CD4-positive, alpha-beta T cell (primary cell): ENCODE measurements at regions of chr17 and their contacts with region 1.

Region 1: DNA sequence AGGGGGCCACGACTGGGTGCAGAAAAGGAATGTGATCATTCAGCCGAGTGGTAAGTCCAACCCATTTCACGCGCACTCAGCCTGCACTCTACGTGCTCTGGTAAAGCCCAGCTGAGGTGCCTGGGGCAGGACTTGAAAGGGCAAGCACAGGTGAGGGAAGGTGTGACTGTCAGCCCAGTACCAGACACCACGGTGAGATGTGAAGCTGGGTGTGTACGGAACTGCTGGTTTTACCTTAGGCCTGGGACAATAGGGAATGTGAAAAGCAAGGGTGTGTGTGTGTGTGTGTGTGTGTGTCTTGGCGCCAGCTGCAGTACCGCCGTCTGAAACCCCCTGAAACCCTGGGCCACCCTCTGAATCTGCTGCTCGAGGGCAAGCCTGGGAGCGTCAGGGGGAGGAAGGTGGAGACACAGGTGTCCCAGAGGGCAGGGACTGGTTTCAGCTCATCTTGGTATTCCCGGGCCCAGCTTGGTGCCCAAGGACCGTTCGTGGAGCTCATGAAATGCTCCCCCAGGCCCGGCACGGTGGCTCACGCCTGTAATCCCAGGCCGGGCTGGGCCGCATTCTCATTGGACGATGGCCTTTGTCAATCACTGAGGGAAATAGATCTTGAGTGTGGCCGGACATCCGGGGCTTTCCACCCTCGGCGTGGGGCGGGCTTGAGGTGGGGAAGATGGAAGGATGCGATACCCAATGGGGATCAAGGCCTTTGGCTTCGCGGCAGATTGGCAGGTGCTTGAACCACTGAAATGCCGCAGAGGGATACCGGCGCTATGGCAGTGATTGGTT is 27.8 kb upstream of the ST6GALNAC1 start:
- DNase-seq: peak; percentile 95 to 100 (median 98)
- ATAC-seq: peak; percentile 98
- H3K4me3 ChIP-seq: peak overlapping the region; percentile 69
- H3K4me3 Mint-ChIP-seq: peak overlapping the region; percentile 88
- H3K27ac ChIP-seq: peak overlapping the region; percentile 72 to 81
- H3K27ac Mint-ChIP-seq: peak overlapping the region; percentile 93
- H3K4me1 ChIP-seq: peaks cover 30% of the 10 kb centered on the region
- H3K4me1 Mint-ChIP-seq: peaks cover 35% of the 10 kb centered on the region
- H3K27me3 ChIP-seq: no peaks in the 10 kb centered on the region
- H3K27me3 Mint-ChIP-seq: no peaks in the 10 kb centered on the region
- CTCF ChIP-seq: no peak

Region 2: GRCh38 chr17:76515274-76515949 is 155.9 kb before region 1 on chr17:
- CTCF ChIA-PET with region 1: no interaction called
- POLR2A ChIA-PET with region 1: interaction called, 8 read pairs
- intact Hi-C with region 1: loop called in 1 of 2 experiments (anchors 2 kb)
- DNase-seq: peak; percentile 71 to 98 (median 80)
- ATAC-seq: peak; percentile 82
- H3K4me3 ChIP-seq: peak overlapping the region; percentile 34
- H3K4me3 Mint-ChIP-seq: peak overlapping the region; percentile 78
- H3K27ac ChIP-seq: peak overlapping the region; percentile 83 to 84
- H3K27ac Mint-ChIP-seq: peak overlapping the region; percentile 98
- H3K4me1 ChIP-seq: peaks cover 86% of the 10 kb centered on the region
- H3K4me1 Mint-ChIP-seq: peaks cover 37% of the 10 kb centered on the region
- H3K27me3 ChIP-seq: no peaks in the 10 kb centered on the region
- H3K27me3 Mint-ChIP-seq: no peaks in the 10 kb centered on the region
- CTCF ChIP-seq: no peak

Region 3: GRCh38 chr17:76623271-76624146 is 47.8 kb before region 1 on chr17:
- CTCF ChIA-PET with region 1: interaction called, 11 read pairs
- POLR2A ChIA-PET with region 1: interaction called, 7 read pairs
- intact Hi-C with region 1: no loop called
- DNase-seq: peak; percentile 59 to 87 (median 74)
- ATAC-seq: peak; percentile 99
- H3K4me3 ChIP-seq: no peak overlapping the region
- H3K4me3 Mint-ChIP-seq: no peak overlapping the region
- H3K27ac ChIP-seq: no peak overlapping the region
- H3K27ac Mint-ChIP-seq: no peak overlapping the region
- H3K4me1 ChIP-seq: peaks cover 5% of the 10 kb centered on the region
- H3K4me1 Mint-ChIP-seq: peaks cover 5% of the 10 kb centered on the region
- H3K27me3 ChIP-seq: no peaks in the 10 kb centered on the region
- H3K27me3 Mint-ChIP-seq: peaks cover 10% of the 10 kb centered on the region
- CTCF ChIP-seq: peak; percentile 94

Region 4: DNA sequence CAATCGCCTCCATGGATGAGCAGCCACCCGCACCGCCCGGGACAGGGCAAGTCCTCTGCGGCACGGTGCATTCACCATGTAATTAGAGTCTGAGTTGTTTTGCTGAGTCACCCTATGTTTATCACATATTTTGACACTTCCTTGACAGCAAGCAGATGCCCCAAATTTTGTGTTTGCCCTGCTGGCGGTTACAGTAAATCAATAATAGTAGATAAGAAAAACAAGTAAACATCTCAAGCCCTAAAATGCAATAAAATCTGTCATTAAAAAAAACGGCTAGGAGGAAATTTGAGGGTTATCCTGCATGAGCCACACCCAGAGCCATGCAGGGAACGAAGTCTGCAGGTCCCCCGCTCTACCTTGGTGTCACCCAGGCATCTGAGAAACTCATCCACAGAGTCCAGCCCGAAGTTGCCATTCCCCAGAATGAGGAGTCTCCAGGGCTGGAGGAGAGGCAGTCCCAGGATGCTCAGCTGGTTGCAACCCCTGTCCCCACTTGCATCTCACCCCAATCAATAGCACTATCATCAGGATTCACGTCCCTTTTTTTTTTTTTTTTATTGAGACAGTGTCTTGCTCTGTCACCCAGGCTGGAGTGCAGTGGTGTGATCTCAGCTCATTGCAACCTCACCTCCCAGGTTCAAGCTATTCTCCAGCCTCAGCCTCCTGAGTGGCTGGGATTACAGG is 11.2 kb before region 1 on chr17:
- CTCF ChIA-PET with region 1: interaction called, 3 read pairs
- POLR2A ChIA-PET with region 1: interaction called, 12 read pairs
- intact Hi-C with region 1: no loop called
- DNase-seq: peak in 8 of 14 experiments; percentile 6 to 61 (median 42)
- ATAC-seq: peak; percentile 79
- H3K4me3 ChIP-seq: no peak overlapping the region
- H3K4me3 Mint-ChIP-seq: peak overlapping the region; percentile 18
- H3K27ac ChIP-seq: no peak overlapping the region
- H3K27ac Mint-ChIP-seq: peak overlapping the region; percentile 69
- H3K4me1 ChIP-seq: peaks cover 37% of the 10 kb centered on the region
- H3K4me1 Mint-ChIP-seq: peaks cover 36% of the 10 kb centered on the region
- H3K27me3 ChIP-seq: no peaks in the 10 kb centered on the region
- H3K27me3 Mint-ChIP-seq: no peaks in the 10 kb centered on the region
- CTCF ChIP-seq: no peak

Region 5: GRCh38 chr17:76681222-76682137 is 10.2 kb after region 1 on chr17:
- CTCF ChIA-PET with region 1: interaction called, 20 read pairs
- POLR2A ChIA-PET with region 1: interaction called, 16 read pairs
- intact Hi-C with region 1: no loop called
- DNase-seq: peak; percentile 63 to 85 (median 72)
- ATAC-seq: peak; percentile 86
- H3K4me3 ChIP-seq: no peak overlapping the region
- H3K4me3 Mint-ChIP-seq: no peak overlapping the region
- H3K27ac ChIP-seq: no peak overlapping the region
- H3K27ac Mint-ChIP-seq: peak overlapping the region; percentile 53
- H3K4me1 ChIP-seq: peaks cover 45% of the 10 kb centered on the region
- H3K4me1 Mint-ChIP-seq: peaks cover 11% of the 10 kb centered on the region
- H3K27me3 ChIP-seq: no peaks in the 10 kb centered on the region
- H3K27me3 Mint-ChIP-seq: no peaks in the 10 kb centered on the region
- CTCF ChIP-seq: peak; percentile 65